PC-9 (cell line): ENCODE measurements at regions of chr1 and their contacts with region 1.

Region 1: GRCh38 chr1:31789259-31790065 is 25.3 kb upstream of the ADGRB2 start:
- DNase-seq: peak; percentile 86 to 96
- H3K4me3 ChIP-seq: peak overlapping the region; percentile 65
- H3K27ac ChIP-seq: no peak overlapping the region
- H3K4me1 ChIP-seq: peaks cover 10% of the 10 kb centered on the region; the same call in 1 of the 2 replicates
- H3K27me3 ChIP-seq: no peaks in the 10 kb centered on the region
- CTCF ChIP-seq: peak; percentile 100

Region 2: DNA sequence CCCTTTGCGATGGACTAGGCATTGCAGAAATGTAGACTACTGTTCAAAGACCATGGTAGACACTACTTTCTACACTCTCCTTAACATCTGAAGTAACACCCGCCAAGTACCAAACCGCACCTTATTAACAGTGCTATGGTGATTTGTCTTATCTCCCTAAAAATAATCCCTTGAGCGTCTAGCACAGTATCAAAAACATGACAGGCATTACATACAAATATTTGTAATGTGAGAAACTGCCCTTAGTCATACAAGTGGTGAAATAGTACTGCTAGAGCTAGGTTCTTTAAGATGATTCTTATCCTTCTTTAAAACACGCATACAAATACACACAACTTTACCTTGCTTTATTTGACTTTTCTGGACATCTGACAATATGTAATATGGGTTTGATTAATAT is 751.1 kb before region 1 on chr1:
- CTCF ChIA-PET with region 1: no interaction called
- POLR2A ChIA-PET with region 1: interaction called, 12 read pairs
- intact Hi-C with region 1: no loop called
- DNase-seq: no peak
- H3K4me3 ChIP-seq: no peak overlapping the region
- H3K27ac ChIP-seq: no peak overlapping the region
- H3K4me1 ChIP-seq: no peaks in the 10 kb centered on the region; the same call in 1 of the 2 replicates
- H3K27me3 ChIP-seq: no peaks in the 10 kb centered on the region
- CTCF ChIP-seq: no peak

Region 3: DNA sequence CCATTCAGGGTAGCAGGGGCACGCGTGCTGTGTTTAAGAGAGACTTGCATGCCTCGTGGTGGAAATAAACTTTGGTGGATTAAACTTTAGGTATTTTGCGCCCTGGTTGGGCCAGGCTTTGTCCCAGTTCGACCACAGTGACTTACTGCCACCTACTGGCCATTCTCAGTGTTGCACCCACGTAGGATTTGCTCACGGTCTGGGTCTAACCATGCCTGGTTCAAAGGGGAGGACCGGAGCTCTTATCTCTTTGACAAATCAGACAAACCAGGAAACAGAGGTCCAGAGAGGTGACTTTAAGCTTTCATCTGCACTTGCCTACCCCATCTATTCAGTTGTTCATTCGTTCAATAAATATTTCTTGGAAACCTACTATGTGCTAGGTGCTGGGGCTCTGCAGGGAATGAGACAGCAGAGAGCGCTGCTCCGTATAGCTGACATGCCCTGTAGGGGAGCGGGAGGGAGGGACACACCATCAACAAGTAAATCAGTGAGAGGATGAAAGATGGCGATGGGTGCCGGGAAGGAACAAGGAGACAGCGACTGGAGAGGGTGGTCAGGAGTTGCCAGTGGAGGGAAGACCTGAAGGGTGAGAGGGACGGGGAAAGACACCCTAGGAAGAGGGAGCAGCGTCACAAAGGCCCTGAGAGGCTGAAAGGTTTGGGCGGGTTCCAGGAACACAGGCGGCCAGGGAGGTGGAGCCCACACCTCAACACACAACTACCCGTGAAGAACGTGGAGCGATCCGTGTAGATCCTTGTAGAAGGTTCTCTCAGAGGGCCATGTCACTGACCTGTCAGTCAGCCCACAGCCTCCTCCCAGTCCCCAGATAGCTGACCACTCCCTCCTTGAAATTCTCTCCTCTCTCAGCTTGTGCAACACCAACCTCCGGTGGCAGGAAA is 240.3 kb before region 1 on chr1:
- CTCF ChIA-PET with region 1: interaction called, 6 read pairs
- POLR2A ChIA-PET with region 1: no interaction called
- intact Hi-C with region 1: loop called (anchors 1 kb)
- DNase-seq: peak; percentile 93
- H3K4me3 ChIP-seq: peak overlapping the region; percentile 51
- H3K27ac ChIP-seq: peak overlapping the region; percentile 45
- H3K4me1 ChIP-seq: peaks cover 27% of the 10 kb centered on the region
- H3K27me3 ChIP-seq: no peaks in the 10 kb centered on the region
- CTCF ChIP-seq: peak; percentile 100

Region 4: DNA sequence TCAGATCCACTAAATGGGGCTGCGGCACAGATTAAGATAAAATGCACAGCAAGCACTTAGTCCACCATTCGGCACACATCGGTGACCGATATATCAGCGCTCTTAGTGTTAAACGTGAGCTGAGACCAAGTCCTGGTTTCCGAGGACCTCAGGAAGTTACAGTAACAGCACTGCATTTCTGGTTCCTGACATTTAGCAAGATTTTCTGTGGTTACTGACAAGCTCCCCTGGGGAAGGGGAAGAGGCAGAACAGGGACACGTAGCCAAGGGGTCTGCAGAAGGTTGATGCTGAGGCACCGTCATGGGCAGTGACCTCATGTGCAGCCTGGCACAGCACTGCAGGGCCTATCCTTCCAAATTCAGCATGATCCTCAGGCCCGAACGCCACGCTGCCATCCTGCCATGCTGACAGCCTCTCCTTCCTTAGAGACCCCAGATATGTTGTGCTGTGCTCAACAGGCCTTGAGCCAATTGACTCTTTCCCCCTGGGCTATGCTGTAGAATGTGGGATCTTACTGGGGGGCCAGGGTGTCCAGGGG is 131.4 kb before region 1 on chr1:
- CTCF ChIA-PET with region 1: interaction called, 11 read pairs
- POLR2A ChIA-PET with region 1: no interaction called
- intact Hi-C with region 1: no loop called
- DNase-seq: no peak
- H3K4me3 ChIP-seq: no peak overlapping the region
- H3K27ac ChIP-seq: no peak overlapping the region
- H3K4me1 ChIP-seq: no peaks in the 10 kb centered on the region
- H3K27me3 ChIP-seq: no peaks in the 10 kb centered on the region
- CTCF ChIP-seq: no peak

Region 5: GRCh38 chr1:31715087-31715872 is 74.2 kb before region 1 on chr1:
- CTCF ChIA-PET with region 1: interaction called, 7 read pairs
- POLR2A ChIA-PET with region 1: interaction called, 4 read pairs
- intact Hi-C with region 1: loop called (anchors 2 kb)
- DNase-seq: peak; percentile 90 to 93
- H3K4me3 ChIP-seq: peak overlapping the region; percentile 59
- H3K27ac ChIP-seq: no peak overlapping the region
- H3K4me1 ChIP-seq: peaks cover 45% of the 10 kb centered on the region
- H3K27me3 ChIP-seq: peaks cover 7% of the 10 kb centered on the region; the same call in 1 of the 2 replicates
- CTCF ChIP-seq: peak; percentile 98

Region 6: DNA sequence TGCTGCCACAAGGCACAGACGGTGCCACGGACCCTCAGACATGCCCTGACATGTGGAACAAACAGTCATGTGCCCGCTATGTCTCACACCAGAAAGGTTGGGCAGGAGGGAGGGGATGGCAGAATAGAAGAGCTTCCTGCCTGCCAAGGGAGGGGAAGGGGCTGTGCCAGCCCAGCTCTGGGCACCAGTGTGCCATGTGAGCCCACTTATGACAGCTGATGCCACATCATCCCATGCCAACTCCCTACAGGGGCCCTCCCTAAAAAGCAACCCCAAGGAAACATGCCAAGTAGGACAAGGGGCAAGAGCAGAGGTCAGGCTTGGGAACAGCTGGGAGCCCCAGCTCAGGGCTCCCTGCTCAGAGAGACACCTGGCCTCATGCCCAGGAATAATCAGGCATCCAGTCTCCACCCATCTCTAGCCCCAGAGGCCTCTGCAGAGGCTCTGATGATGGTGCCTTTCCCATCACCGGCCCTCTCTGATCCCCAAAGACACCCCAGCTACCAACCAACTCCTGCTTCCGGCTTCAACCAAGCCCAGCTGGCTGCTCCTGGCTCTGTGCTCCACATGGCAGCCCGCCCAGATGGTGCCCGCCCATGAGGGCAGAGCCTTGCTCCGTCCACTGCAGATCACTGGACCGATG is 35.6 kb before region 1 on chr1:
- CTCF ChIA-PET with region 1: no interaction called
- POLR2A ChIA-PET with region 1: no interaction called
- intact Hi-C with region 1: no loop called
- DNase-seq: no peak
- H3K4me3 ChIP-seq: no peak overlapping the region
- H3K27ac ChIP-seq: no peak overlapping the region
- H3K4me1 ChIP-seq: peaks cover 19% of the 10 kb centered on the region
- H3K27me3 ChIP-seq: no peaks in the 10 kb centered on the region
- CTCF ChIP-seq: no peak

Region 7: DNA sequence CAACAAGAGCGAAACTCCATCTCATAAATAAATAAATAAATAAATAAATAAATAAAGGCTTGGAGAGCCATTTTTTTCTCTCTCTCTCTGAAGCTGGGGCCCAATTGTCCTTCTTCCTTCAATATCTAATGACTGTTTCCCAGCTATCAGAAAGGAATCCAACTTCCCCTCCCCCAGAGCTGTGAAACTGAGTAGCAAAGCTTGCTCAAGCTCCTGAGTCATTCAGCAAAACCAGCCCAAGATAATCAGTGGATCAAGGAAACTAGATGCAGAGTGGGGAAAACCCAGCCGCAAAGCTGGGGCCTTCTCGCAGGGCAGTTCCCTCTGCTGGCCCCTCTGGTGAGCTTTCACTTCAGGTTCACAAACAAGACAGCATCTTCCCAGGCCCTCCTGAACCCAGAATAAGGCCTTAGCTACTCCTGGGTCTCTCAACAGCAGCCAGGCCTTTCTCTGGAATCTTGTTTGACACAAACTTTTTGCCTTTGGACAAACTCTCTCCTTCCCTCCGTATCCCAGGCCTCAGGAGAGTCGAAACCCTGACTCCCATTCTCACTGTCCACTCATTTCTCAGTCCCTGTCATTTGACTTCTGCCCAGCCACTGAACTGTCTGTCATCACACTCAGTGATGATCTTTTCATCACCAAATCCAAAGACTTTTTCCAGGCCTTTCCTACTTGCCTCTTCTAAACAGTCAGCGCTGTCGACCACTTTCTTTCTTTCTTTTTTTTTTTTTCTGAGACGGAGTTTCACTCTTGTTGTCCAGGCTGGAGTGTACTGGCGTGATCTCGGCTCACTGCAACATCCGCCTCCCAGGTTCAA is 166.7 kb after region 1 on chr1:
- CTCF ChIA-PET with region 1: no interaction called
- POLR2A ChIA-PET with region 1: interaction called, 5 read pairs
- intact Hi-C with region 1: loop called (anchors 2 kb)
- DNase-seq: peak; percentile 88 to 100
- H3K4me3 ChIP-seq: peak overlapping the region; percentile 36; the same call in 1 of the 2 replicates
- H3K27ac ChIP-seq: peak overlapping the region; percentile 98
- H3K4me1 ChIP-seq: peaks cover 65% of the 10 kb centered on the region
- H3K27me3 ChIP-seq: no peaks in the 10 kb centered on the region
- CTCF ChIP-seq: peak; percentile 62

Region 8: GRCh38 chr1:32111789-32112188 is 322.3 kb after region 1 on chr1:
- CTCF ChIA-PET with region 1: no interaction called
- POLR2A ChIA-PET with region 1: no interaction called
- intact Hi-C with region 1: no loop called
- DNase-seq: no peak
- H3K4me3 ChIP-seq: no peak overlapping the region
- H3K27ac ChIP-seq: no peak overlapping the region
- H3K4me1 ChIP-seq: 0 out of 2 replicates have a peak, but pooled peaks cover 5% of the 10 kb centered on the region
- H3K27me3 ChIP-seq: no peaks in the 10 kb centered on the region
- CTCF ChIP-seq: no peak